ENCODE measurements at regions of chr17 and their contacts with region 1.

Region 1: DNA sequence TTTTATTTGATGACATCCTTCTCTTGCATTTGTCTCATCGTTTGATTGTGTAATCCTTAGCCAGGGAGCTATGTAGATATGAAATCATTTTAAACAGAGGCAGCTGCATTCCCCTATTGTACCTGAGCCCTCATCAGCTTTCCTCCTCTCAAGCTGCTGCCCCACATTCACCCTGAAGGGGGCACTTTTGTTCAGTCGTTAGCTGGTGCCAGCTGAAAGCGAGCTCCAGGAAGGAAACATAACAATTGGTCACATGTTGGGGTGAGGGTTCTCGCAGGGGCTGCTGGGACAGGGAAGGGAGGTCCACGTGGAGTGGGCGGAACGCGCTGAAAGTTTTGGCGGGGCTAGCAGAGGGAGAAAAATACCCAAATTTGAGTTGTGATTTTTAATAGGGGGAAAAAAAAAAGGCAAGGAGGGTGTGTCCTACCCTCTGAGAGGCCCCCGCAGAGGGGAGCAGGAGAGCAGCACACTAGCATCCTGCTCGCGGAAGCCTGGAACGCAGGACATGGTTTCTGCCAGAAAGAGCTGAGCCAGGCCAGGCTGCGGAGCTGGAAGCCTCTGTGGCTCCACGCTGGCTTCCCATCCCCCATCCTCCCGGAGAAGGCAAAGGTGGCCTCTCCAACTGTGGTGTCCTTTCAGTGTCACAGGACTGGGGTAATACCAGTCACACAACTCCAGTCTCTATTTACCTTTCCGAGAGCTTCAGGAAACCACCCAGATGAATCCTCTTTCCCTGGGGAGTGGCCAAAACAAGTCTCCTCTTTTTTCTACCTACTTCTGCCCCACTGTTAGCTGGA is 8.5 kb upstream of the MSL1 start:
- DNase-seq: peak; percentile 97
- H3K4me3 ChIP-seq: peak overlapping the region; percentile 64
- H3K27ac ChIP-seq: peak overlapping the region; percentile 78
- H3K4me1 ChIP-seq: peaks cover 60% of the 10 kb centered on the region
- CTCF ChIP-seq: peak; percentile 95

Region 2: DNA sequence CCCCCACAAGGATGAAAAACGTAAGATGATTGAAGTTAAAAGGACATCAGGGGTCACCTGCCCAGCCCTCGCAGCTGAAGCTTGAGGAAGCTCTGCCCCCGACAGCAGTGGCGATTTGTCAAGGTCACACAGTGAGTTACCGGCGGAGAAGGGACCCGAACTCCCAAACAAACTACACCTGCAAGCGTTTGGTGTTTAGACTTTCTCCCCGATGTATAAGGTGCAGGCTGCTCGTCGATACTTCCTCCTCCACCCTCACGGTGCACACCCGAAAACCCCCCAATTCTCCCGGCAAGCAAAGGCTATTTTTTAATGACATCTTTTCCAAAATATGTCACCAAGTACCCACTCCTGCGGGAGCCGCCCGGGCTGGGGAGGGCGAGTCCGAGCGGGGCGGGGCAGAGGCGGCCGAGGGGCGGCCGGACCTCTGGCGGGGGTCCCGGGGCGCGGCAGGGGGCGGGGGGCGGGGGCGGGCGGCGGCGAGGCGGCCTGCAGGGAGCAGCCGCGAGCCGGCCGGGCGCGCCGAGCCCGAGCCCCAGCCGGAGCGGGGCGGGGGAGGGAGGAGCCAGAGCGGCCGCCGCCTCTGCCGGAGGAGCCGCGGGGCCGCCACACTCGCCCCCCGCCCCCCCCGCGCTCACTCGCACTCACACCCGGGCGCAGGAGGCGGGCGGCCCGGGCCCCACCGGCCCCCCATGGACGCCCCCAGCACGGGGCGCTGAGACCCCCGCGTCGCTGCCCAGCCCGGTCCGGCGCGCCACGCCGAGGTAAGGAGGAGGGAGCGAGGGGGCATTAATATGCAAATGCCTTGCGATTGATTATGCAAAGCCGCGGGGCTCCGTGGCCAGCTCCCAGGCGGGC is 50.8 kb before region 1 on chr17 and contains the start of gene THRA:
- CTCF ChIA-PET with region 1: no interaction called
- POLR2A ChIA-PET with region 1: interaction called, 3 read pairs
- intact Hi-C with region 1: loop called (anchors 2 kb)
- DNase-seq: peak; percentile 76
- H3K4me3 ChIP-seq: peak within 1 kb of the TSS; percentile 78
- H3K27ac ChIP-seq: no peak within 1 kb of the TSS
- H3K4me1 ChIP-seq: peaks cover 32% of the 10 kb centered on the region
- CTCF ChIP-seq: 0 out of 2 replicates have a peak, but pooled peaks have one; percentile 14
- total RNA-seq, gene THRA: 5.4 and 9.3 TPM in 2 replicates

Region 3: DNA sequence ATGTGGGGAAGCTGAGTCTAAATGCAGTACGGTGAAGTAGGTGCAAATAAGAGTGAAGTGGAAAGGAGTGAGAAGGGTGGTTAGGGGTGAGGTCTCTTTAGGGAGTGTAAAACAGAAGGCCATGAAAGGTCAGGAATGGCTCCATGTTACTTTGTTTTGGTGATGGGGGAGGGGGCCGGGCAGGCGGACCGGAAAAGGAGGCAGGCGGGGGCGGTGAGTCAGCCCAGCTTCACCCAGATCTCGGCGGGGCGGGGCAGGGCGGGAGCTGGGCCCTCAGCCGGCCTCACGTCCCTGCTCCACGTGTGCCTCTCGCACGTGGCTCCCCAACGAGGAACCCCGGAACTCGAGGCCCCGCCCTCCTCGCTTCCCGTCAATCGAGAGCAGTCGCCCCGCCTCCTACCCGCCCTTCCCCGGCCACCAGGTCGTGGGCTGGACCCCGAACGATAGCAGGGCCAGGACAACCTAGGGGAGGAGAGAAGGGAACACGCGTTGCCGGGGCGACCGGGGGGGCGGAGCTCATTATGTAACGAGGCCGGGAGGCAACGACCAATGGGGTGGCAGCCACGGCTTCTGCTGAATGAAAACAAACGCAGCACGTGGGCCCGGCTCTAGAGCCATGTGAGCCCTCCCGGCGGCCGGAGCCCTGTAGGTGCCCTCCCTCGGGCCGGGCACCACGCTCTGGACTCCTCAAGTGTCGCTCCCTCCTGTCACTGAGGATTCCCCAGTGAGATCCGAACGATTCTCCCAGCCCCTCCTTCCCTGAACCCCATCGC is 14.3 kb before region 1 on chr17:
- CTCF ChIA-PET with region 1: interaction called, 17 read pairs
- POLR2A ChIA-PET with region 1: interaction called, 52 read pairs
- intact Hi-C with region 1: no loop called
- DNase-seq: peak; percentile 96
- H3K4me3 ChIP-seq: peak overlapping the region; percentile 78
- H3K27ac ChIP-seq: peak overlapping the region; percentile 75
- H3K4me1 ChIP-seq: peaks cover 52% of the 10 kb centered on the region
- CTCF ChIP-seq: no peak

Region 4: DNA sequence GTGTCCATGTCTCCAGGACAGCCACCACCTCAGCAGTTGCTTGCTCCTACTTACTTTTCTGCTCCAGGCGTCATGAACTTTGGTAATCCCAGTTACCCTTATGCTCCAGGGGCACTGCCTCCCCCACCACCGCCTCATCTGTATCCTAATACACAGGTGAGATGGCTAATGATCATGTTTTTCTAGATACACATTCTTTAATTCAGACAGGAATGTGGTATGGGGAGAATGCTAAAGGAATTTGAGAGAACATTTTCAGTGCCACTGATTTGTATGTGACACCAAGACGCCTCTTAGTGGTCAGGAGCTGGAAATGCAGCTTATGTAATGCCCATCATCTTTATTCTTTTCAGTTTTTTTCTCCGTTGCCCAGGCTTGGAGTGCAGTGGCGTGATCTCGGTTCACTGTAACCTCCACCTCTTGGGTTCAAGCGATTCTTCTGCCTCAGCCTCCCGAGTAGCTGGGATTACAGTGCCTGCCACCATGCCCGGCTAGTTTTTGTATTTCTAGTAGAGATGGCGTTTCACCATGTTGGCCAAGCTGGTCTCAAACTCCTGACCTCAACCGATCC is 55.0 kb after region 1 on chr17:
- CTCF ChIA-PET with region 1: interaction called, 21 read pairs
- POLR2A ChIA-PET with region 1: interaction called, 6 read pairs
- intact Hi-C with region 1: loop called (anchors 1 kb)
- DNase-seq: peak; percentile 72
- H3K4me3 ChIP-seq: no peak overlapping the region
- H3K27ac ChIP-seq: no peak overlapping the region
- H3K4me1 ChIP-seq: no peaks in the 10 kb centered on the region
- CTCF ChIP-seq: peak; percentile 85

Region 5: DNA sequence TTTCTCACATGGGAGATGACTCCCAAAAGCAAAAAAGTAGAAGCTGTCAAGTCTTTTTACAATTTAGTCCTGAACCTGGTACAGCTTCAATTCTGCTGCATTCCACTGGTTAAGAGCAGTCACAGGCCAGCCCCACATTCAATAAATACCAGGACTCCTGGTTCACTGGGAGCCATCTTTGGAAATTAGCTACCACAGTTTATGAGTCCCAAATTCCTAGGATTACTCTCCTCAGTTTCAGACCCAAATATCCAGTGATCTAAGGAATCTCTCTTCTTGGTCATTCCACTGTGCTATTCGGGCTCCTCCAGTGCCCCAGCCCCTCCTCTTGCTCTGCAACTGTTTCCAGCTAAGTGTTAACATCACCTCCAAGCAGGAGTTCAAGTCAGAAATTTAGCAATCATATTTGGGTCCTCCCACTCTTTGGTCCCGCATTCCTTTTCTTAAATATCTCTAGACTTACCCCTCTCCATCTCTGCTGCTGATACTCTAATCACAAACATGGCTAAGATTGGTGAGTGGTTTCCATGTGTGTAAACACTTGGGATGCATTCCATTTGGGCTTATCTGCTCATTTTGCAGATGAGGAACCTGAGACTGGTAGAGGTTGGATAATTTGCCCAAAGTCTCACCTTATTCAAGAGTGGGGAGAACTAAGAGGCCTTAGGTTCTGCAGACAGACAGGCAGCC is 96.2 kb after region 1 on chr17:
- CTCF ChIA-PET with region 1: no interaction called
- POLR2A ChIA-PET with region 1: no interaction called
- intact Hi-C with region 1: no loop called
- DNase-seq: no peak
- H3K4me3 ChIP-seq: no peak overlapping the region
- H3K27ac ChIP-seq: no peak overlapping the region
- H3K4me1 ChIP-seq: no peaks in the 10 kb centered on the region
- CTCF ChIP-seq: no peak

Region 6: GRCh38 chr17:40287494-40288369 is 174.4 kb after region 1 on chr17 and contains the start of gene CDC6:
- CTCF ChIA-PET with region 1: no interaction called
- POLR2A ChIA-PET with region 1: interaction called, 3 read pairs
- intact Hi-C with region 1: loop called (anchors 5 kb)
- DNase-seq: peak; percentile 100
- H3K4me3 ChIP-seq: peak within 1 kb of the TSS; percentile 97
- H3K27ac ChIP-seq: peak within 1 kb of the TSS; percentile 89
- H3K4me1 ChIP-seq: peaks cover 31% of the 10 kb centered on the region
- CTCF ChIP-seq: no peak
- total RNA-seq, gene CDC6: 72.3 and 75.2 TPM in 2 replicates

Region 7: DNA sequence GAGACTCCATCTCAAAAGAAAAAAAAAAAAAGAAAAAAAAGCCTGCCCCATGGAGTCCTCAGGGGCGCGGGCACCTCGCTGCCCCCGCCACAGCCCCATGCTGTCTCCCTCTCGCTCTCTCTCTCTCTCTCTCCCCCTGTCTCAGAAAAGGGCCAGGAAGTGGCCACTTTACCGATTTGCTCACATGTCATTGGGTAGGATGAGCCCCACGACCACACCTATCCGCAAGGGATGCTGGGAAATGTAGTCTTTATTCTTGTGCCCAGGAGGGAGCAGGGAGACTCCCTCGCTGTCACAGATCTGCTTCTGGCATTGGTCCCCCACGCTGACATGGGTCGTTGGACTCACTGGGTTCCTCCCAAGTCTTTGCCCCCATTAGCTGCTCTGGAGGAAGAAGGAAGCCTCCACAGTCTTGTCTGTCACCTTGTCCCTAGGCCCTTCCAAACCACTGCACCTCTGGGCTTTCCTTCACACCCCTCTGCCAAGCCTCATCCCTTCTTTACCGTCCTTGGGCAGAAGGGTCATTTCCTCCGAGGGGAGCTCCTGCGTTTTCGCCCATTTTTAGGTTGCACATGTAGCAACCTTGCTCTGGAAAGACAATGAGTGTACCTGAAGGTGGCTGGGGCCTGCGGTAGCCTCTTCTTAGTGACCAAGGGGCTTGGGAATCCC is 258.1 kb after region 1 on chr17:
- CTCF ChIA-PET with region 1: no interaction called
- POLR2A ChIA-PET with region 1: no interaction called
- intact Hi-C with region 1: no loop called
- DNase-seq: peak; percentile 62
- H3K4me3 ChIP-seq: no peak overlapping the region
- H3K27ac ChIP-seq: no peak overlapping the region
- H3K4me1 ChIP-seq: no peaks in the 10 kb centered on the region
- CTCF ChIP-seq: no peak

Measured in OCI-LY7 (cell line).